Lower leg skin (tissue), 4 donors: ENCODE measurements at regions of chr19 and their contacts with region 1.

Region 1: GRCh38 chr19:42445948-42446347 is 3.2 kb upstream of the CXCL17 start:
- DNase-seq: no peak
- H3K4me3 ChIP-seq: no peak overlapping the region
- CTCF ChIP-seq: no peak
- POLR2A ChIP-seq: no peak

Region 2: DNA sequence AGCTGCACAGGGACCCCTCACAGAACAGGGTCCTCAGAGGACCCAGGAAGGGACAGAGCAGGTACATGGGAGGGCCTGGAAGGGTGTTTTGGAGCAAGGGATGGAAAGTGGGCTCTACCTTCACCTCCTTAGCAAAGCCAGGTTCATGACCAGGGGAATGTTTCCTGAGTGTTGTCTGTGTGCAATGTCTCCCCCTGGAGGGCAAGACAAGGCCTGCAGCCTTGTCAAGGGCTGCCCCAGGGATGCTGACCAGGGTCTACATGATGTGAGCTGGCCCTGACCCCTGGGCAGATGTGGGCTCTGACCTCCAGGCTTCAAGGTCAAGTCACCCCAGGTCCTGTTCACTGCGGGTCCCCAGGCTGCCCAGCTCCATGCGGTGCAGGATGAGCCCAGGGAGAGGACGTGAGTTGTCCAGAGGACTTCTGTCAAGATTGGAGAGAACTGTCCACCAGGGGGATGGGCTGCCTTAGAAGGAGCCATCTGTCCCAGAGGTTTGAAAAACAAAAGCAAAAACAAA is 83.4 kb after region 1 on chr19:
- intact Hi-C with region 1: loop called (anchors 5 kb)
- DNase-seq: peak; percentile 32 to 87
- H3K4me3 ChIP-seq: no peak overlapping the region
- CTCF ChIP-seq: peak in 1 of 3 donors; percentile 59
- POLR2A ChIP-seq: no peak

Region 3: GRCh38 chr19:42563352-42564210 is 117.6 kb after region 1 on chr19:
- intact Hi-C with region 1: no loop called
- DNase-seq: no peak
- H3K4me3 ChIP-seq: no peak overlapping the region
- CTCF ChIP-seq: no peak
- POLR2A ChIP-seq: no peak